Caco-2 (cell line): ENCODE measurements at regions of chr2 and their contacts with region 1.

Region 1: GRCh38 chr2:21307037-21307436 is 183.3 kb downstream of the TDRD15 start:
- DNase-seq: peak; percentile 64 to 73
- H3K4me3 ChIP-seq: no peak overlapping the region
- H3K4me3 Mint-ChIP-seq: no peak overlapping the region
- H3K27ac Mint-ChIP-seq: no peak overlapping the region
- H3K4me1 ChIP-seq: peaks cover 35% of the 10 kb centered on the region
- H3K4me1 Mint-ChIP-seq: peaks cover under 1% of the 10 kb centered on the region
- H3K27me3 ChIP-seq: no peaks in the 10 kb centered on the region; the same call in 1 of the 2 replicates
- H3K27me3 Mint-ChIP-seq: no peaks in the 10 kb centered on the region
- CTCF ChIP-seq: no peak

Region 2: DNA sequence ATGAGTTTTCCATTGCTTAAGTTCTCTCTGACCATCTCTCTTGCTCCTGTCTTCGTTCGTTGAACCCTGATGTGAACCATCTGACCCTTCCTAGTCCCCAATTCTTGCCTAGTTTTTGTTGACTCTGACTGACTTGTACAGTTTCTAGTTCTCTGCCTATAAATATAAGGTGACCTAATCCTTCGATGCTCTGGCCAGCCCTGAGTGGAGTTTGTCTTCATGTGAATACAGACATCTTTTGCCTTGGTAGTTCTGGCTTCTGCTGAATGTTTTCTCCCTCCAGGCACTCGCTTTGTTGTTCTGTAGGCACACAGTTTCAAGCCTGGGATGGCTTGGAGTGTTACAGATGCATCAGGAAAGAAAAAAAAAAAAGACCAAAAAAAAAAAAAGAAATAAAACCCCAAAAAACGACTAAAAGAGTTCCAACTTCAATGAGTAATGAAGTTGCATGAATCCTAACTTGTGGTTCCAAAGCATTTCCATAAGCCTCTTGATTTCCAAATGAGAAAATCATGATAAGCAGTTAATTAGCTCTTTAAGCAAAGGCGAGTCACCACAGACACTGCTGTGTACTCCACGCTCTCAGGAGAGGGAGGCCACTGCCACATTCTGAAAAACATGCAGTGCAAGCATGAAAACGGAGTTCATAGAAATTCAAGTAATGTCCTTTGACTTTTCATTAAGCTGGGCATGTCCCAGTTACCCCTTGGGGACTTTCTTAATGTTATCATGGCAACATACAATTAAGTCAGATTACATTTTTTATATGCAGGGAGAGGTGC is 18.1 kb before region 1 on chr2:
- CTCF ChIA-PET with region 1: no interaction called
- POLR2A ChIA-PET with region 1: no interaction called
- intact Hi-C with region 1: loop called (anchors 1 kb)
- DNase-seq: no peak
- H3K4me3 ChIP-seq: no peak overlapping the region
- H3K4me3 Mint-ChIP-seq: no peak overlapping the region
- H3K27ac Mint-ChIP-seq: no peak overlapping the region
- H3K4me1 ChIP-seq: peaks cover 23% of the 10 kb centered on the region
- H3K4me1 Mint-ChIP-seq: peaks cover 12% of the 10 kb centered on the region
- H3K27me3 ChIP-seq: no peaks in the 10 kb centered on the region
- H3K27me3 Mint-ChIP-seq: no peaks in the 10 kb centered on the region
- CTCF ChIP-seq: no peak

Region 3: DNA sequence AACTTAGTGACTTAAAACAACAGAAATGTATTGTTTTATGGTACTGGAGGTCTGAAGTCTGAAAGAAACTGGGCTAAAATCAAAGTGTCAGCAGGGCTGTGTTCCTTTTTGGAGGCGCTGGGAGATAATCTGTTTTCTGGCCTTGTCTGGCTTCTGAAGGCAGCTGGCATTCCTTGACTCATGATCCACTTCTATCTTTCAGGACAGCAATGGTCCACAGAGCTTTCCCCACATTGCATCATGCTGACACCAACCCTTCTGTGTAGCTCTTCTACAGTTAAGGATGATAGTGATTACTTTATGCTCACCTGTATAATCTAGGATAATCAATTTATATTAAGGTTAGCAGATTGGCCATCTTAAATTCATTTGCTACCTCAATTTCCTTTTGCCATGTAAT is 208.9 kb after region 1 on chr2:
- CTCF ChIA-PET with region 1: no interaction called
- POLR2A ChIA-PET with region 1: no interaction called
- intact Hi-C with region 1: no loop called
- DNase-seq: peak in 1 of 2 experiments; percentile 9
- H3K4me3 ChIP-seq: no peak overlapping the region
- H3K4me3 Mint-ChIP-seq: no peak overlapping the region
- H3K27ac Mint-ChIP-seq: no peak overlapping the region
- H3K4me1 ChIP-seq: no peaks in the 10 kb centered on the region
- H3K4me1 Mint-ChIP-seq: no peaks in the 10 kb centered on the region
- H3K27me3 ChIP-seq: no peaks in the 10 kb centered on the region
- H3K27me3 Mint-ChIP-seq: no peaks in the 10 kb centered on the region
- CTCF ChIP-seq: no peak

Region 4: GRCh38 chr2:21966133-21966532 is 659.1 kb after region 1 on chr2:
- CTCF ChIA-PET with region 1: no interaction called
- POLR2A ChIA-PET with region 1: no interaction called
- intact Hi-C with region 1: no loop called
- DNase-seq: no peak
- H3K4me3 ChIP-seq: no peak overlapping the region
- H3K4me3 Mint-ChIP-seq: no peak overlapping the region
- H3K27ac Mint-ChIP-seq: no peak overlapping the region
- H3K4me1 ChIP-seq: no peaks in the 10 kb centered on the region
- H3K4me1 Mint-ChIP-seq: no peaks in the 10 kb centered on the region
- H3K27me3 ChIP-seq: no peaks in the 10 kb centered on the region
- H3K27me3 Mint-ChIP-seq: peaks cover 6% of the 10 kb centered on the region
- CTCF ChIP-seq: no peak